MCF 10A (cell line): ENCODE measurements at regions of chr2 and their contacts with region 1.

Region 1: DNA sequence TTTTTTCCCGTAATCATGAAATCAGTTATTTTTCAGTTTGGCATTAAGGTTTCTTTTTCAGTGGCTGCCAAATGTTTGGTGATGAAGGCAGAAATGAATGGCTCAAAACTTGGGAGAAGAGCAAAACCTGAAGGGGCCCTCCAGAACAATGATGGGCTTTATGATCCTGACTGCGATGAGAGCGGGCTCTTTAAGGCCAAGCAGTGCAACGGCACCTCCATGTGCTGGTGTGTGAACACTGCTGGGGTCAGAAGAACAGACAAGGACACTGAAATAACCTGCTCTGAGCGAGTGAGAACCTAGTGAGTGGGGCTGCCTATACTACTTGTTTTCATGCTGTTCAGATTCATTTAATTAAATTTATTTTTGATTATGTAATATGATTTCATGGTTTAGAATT is 29.2 kb upstream of the MSH2 start:
- DNase-seq: no peak
- H3K4me3 Mint-ChIP-seq: no peak overlapping the region
- H3K27ac Mint-ChIP-seq: no peak overlapping the region
- H3K4me1 Mint-ChIP-seq: no peaks in the 10 kb centered on the region
- H3K27me3 Mint-ChIP-seq: no peaks in the 10 kb centered on the region
- CTCF ChIP-seq: no peak

Region 2: GRCh38 chr2:47334356-47335136 is 39.2 kb before region 1 on chr2:
- CTCF ChIA-PET with region 1: interaction called, 13 read pairs
- POLR2A ChIA-PET with region 1: no interaction called
- intact Hi-C with region 1: no loop called
- DNase-seq: no peak
- H3K4me3 Mint-ChIP-seq: no peak overlapping the region
- H3K27ac Mint-ChIP-seq: no peak overlapping the region
- H3K4me1 Mint-ChIP-seq: no peaks in the 10 kb centered on the region
- H3K27me3 Mint-ChIP-seq: no peaks in the 10 kb centered on the region
- CTCF ChIP-seq: no peak

Region 3: DNA sequence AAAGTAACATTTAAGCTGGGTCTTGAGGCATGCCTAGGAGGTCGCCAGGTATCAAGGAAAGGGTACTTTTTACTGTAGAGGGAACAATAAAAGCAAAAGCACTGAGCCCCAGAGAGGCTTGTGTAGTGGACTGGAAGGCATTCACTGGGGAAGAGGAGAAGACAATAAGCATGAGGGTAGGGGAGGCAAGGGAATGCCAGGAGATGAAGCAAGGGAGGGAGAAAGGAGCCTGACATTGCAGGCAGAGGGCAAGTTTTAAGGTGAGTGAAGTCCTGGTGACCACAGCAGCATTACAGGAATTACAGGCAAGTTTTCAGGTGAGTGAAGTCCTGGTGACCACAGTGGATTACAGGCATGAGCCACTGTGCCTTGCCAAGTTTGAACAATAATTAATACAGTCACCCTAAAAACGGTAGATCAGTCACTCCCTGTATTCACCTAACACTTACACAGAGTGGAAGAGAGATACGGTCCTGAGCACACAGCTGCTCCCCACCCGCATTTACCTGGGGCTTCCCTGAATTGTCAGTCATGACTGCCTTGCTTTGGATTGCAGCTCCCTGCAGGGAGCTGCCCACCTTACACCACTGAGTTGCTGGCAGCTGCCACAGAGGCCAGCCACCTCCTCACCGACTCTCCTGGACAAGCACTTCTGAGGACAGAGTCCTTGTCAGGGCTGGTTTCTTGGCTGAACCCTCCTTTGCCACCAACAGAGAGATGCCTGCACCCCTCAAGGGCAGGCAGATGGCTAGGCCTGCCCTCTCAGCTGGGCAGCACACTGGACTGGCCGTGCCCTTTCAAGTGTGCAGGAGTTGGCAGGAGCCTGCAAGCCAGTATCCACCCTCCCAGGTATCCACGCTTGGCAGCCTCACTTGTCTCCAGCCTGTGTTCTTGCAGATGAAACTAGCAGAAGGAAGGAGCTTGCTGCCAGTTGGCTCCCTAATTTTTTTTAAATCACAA is 256.0 kb after region 1 on chr2:
- CTCF ChIA-PET with region 1: no interaction called
- POLR2A ChIA-PET with region 1: no interaction called
- intact Hi-C with region 1: no loop called
- DNase-seq: no peak
- H3K4me3 Mint-ChIP-seq: no peak overlapping the region
- H3K27ac Mint-ChIP-seq: no peak overlapping the region
- H3K4me1 Mint-ChIP-seq: peaks cover 19% of the 10 kb centered on the region
- H3K27me3 Mint-ChIP-seq: peaks cover 18% of the 10 kb centered on the region
- CTCF ChIP-seq: no peak